AG04449 (cell line): ENCODE measurements at regions of chr11 and their contacts with region 1.

Region 1: GRCh38 chr11:132106096-132106982 is 735.9 kb downstream of the NTM start:
- DNase-seq: no peak
- H3K4me3 ChIP-seq: no peak overlapping the region
- CTCF ChIP-seq: no peak

Region 2: DNA sequence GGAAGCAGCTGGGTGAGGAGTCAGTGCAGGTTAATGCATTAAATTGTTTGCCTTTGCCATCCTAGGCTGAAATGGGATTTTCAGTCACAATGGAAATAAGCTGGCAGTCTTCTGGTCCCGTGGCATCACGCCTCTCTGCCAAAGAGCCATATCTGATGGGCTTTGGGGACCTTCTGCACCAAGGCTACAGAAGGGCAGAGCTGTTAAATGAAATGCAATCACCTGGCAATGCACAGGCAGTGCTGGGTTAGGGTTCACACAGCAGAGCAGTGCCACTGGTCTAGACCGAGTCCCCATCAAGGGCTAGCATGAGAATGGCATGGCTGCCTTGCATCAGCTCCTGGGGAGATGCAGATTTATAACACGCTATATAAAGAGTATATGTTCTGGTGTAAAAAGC is 13.2 kb after region 1 on chr11:
- CTCF ChIA-PET with region 1: interaction called, 13 read pairs
- POLR2A ChIA-PET with region 1: no interaction called
- DNase-seq: no peak
- H3K4me3 ChIP-seq: no peak overlapping the region
- CTCF ChIP-seq: no peak